ENCODE measurements at regions of chr21 and their contacts with region 1.

Region 1: GRCh38 chr21:43789276-43790009 is at the start of gene RRP1:
- DNase-seq: peak; percentile 90
- ATAC-seq: peak; percentile 94
- H3K4me3 Mint-ChIP-seq: peak within 1 kb of the TSS; percentile 97
- H3K27ac Mint-ChIP-seq: peak within 1 kb of the TSS; percentile 95
- H3K4me1 Mint-ChIP-seq: peaks cover 11% of the 10 kb centered on the region
- H3K27me3 Mint-ChIP-seq: no peaks in the 10 kb centered on the region
- CTCF ChIP-seq: peak; percentile 99
- total RNA-seq, gene RRP1: 45.0 to 53.0 TPM (median 45.9 TPM) in 3 replicates

Region 2: GRCh38 chr21:43767984-43768867 is 21.2 kb before region 1 on chr21:
- CTCF ChIA-PET with region 1: interaction called, 20 read pairs
- POLR2A ChIA-PET with region 1: no interaction called
- DNase-seq: peak; percentile 25
- ATAC-seq: peak; percentile 38
- H3K4me3 Mint-ChIP-seq: no peak overlapping the region
- H3K27ac Mint-ChIP-seq: peak overlapping the region; percentile 92
- H3K4me1 Mint-ChIP-seq: peaks cover 46% of the 10 kb centered on the region
- H3K27me3 Mint-ChIP-seq: no peaks in the 10 kb centered on the region; the same call in 1 of the 2 replicates
- CTCF ChIP-seq: no peak